Caco-2 (cell line): ENCODE measurements at regions of chr1 and their contacts with region 1.

Region 1: GRCh38 chr1:159891275-159892157 is 8.4 kb downstream of the CFAP45 start:
- DNase-seq: peak; percentile 74 to 81
- H3K4me3 ChIP-seq: no peak overlapping the region
- H3K4me3 Mint-ChIP-seq: no peak overlapping the region
- H3K27ac Mint-ChIP-seq: no peak overlapping the region
- H3K4me1 ChIP-seq: peaks cover 16% of the 10 kb centered on the region
- H3K4me1 Mint-ChIP-seq: peaks cover 13% of the 10 kb centered on the region
- H3K27me3 ChIP-seq: no peaks in the 10 kb centered on the region
- H3K27me3 Mint-ChIP-seq: no peaks in the 10 kb centered on the region
- CTCF ChIP-seq: peak; percentile 86 to 97

Region 2: DNA sequence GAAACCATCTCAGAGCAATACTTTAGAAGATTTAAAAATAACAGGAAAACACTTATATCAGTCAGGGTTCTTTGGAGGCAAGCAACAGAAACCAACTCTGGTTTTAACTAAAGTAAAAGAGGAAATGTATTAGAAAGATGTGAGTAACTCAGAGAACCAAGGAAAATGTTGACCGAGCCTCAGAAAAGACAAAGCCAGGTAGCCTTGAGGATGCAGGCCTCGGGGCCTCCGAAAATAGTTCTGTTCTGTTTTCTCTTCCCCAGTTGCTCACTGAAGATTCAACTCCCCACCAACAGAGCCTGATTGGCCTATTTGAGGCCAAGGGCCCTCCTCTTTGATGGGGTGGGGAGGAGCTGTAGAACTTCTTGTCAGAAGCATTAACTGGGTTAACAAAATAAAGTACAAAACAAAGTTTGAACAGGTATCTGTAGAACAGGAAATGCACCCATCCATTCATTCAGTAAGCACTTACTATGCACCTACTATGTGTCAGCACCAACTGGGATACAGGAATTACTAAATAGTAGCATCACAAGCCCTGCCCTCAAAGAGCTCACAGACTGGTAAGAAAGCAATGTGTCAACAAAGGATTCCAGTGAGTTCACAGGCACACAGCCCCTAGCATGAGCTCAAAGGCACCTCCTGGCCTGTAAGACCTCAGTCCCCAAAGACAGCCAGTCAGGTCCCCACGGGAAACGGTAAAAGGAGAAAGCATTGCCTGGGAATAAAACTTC is 52.2 kb before region 1 on chr1:
- CTCF ChIA-PET with region 1: interaction called, 3 read pairs
- POLR2A ChIA-PET with region 1: no interaction called
- intact Hi-C with region 1: loop called (anchors 1 kb)
- DNase-seq: no peak
- H3K4me3 ChIP-seq: no peak overlapping the region
- H3K4me3 Mint-ChIP-seq: no peak overlapping the region
- H3K27ac Mint-ChIP-seq: no peak overlapping the region
- H3K4me1 ChIP-seq: no peaks in the 10 kb centered on the region
- H3K4me1 Mint-ChIP-seq: peaks cover 7% of the 10 kb centered on the region
- H3K27me3 ChIP-seq: no peaks in the 10 kb centered on the region
- H3K27me3 Mint-ChIP-seq: no peaks in the 10 kb centered on the region
- CTCF ChIP-seq: no peak

Region 3: GRCh38 chr1:159932296-159933285 is 41.1 kb after region 1 on chr1:
- CTCF ChIA-PET with region 1: no interaction called
- POLR2A ChIA-PET with region 1: no interaction called
- intact Hi-C with region 1: no loop called
- DNase-seq: no peak
- H3K4me3 ChIP-seq: no peak overlapping the region
- H3K4me3 Mint-ChIP-seq: peak overlapping the region; percentile 9
- H3K27ac Mint-ChIP-seq: no peak overlapping the region
- H3K4me1 ChIP-seq: peaks cover 27% of the 10 kb centered on the region
- H3K4me1 Mint-ChIP-seq: peaks cover 20% of the 10 kb centered on the region
- H3K27me3 ChIP-seq: no peaks in the 10 kb centered on the region
- H3K27me3 Mint-ChIP-seq: no peaks in the 10 kb centered on the region
- CTCF ChIP-seq: no peak

Region 4: DNA sequence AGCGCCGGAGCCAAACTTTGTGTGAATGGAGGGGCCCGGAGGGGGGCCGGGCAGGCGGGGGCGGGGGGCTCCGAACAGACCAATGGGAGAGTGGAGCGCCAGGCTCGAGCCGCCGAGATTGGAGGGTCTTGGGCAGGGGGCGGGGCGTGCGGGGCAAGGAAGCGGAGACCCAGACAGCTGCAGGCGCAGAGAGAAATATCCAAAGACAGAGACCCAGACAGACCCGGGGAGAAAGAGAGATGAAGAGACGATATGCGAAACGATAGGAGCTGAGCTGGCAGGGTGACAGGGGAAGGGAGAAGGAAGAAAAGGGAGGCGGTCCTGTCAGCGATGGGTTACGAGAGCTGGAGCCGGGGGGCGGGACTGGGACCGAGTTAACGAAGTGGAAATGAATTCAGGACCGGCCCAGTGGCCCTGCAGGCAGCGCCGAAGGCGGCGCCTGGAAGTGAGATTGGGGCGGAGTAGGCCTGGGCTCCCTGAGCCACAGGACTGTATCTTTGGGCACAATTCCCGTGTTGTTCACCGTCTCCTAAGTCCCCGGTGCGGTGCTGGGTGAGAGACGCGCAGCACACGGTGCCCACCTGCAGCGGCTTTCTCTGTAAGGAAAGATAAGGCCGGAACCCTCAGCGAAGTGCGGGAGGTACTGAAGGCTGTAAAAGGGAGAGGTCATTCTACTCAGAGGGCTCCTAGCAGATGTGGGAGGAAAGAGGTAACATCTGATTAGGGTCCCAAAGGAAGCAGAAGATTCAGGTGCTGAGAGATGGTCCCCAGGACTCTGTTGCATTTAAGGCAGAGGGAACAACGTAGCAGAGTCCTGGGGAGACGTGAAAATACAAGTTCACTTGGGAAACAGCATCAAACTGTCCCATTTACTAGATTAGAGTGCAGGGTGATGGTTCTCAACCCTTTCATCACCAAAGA is 179.0 kb after region 1 on chr1:
- CTCF ChIA-PET with region 1: no interaction called
- POLR2A ChIA-PET with region 1: no interaction called
- intact Hi-C with region 1: no loop called
- DNase-seq: peak; percentile 82 to 86
- H3K4me3 ChIP-seq: peak overlapping the region; percentile 57
- H3K4me3 Mint-ChIP-seq: peak overlapping the region; percentile 92
- H3K27ac Mint-ChIP-seq: no peak overlapping the region
- H3K4me1 ChIP-seq: peaks cover 4% of the 10 kb centered on the region; the same call in 1 of the 2 replicates
- H3K4me1 Mint-ChIP-seq: no peaks in the 10 kb centered on the region
- H3K27me3 ChIP-seq: no peaks in the 10 kb centered on the region
- H3K27me3 Mint-ChIP-seq: peaks cover 15% of the 10 kb centered on the region
- CTCF ChIP-seq: no peak